ENCODE measurements at regions of chrX and their contacts with region 1.

Region 1: DNA sequence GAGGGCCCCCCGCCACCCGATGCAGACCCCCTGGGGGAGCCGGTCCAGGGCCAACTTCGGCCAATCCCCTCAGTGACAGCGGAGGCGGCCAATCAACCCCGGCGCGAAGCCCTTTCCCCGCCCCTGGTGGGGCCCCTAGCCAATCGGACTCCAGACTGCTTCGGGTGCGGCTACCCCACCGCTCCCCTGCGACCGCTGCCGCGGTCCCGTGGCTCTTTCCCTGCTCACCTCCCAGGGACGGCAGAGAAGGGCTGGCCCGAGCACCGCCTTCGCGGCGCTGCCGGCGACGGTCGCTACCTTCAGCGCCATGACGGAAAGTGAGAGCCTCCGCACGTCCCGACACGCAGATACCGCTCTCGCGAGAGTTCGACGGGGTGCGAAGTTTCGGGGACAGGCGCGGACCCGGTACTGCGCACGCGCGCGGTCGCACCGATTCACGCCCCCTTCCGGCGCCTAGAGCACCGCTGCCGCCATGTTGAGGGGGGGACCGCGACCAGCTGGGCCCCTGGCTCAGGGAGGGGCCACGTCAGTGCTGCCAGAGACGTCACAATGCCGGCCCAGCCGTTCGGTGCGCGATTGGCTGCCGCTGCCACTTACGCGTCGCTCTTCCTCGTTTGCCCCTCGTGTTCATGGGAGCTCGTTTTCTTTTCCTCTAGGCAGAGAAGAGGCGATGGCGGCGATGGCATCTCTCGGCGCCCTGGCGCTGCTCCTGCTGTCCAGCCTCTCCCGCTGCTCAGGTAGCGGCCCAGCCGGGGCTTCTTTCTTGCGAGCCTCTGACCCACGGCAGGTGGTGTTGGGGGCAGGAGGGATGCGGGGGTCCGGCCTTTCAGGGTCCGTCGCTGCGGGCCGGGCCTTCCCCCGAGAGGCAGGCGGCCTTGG is at the starts of genes IDH3G and SSR4:
- DNase-seq: peak; percentile 96
- ATAC-seq: peak; percentile 96
- total RNA-seq, gene IDH3G: 76.9 TPM
- total RNA-seq, gene SSR4: 129 TPM

Region 2: GRCh38 chrX:153947009-153947769 is 152.9 kb after region 1 on chrX:
- intact Hi-C with region 1: loop called (anchors 10 kb)
- DNase-seq: peak; percentile 81
- ATAC-seq: peak; percentile 76

Measured in Right ventricle myocardium superior (tissue), 1 donor.